Esophagus squamous epithelium (tissue), 5 donors: ENCODE measurements at regions of chr16 and their contacts with region 1.

Region 1: DNA sequence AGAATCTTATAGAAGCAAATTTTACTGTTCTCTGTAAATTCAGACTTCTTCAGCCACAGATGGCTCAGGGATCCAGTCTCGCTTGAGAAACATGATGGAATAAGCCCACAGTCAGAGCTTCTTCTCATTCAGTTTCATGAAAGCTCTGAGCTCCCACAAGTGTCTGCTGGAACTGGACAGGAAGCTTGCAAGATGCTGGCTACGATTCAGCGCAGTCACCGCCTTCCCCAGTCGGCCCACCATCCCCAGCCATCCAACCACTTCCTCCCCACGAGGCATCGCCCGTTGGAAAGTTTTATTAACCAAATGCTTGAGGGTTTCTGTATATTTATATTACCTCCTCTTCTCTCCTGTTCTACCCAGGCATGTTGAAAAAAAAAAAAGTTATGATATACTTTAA is 171.7 kb downstream of the ZFHX3 start:
- DNase-seq: no peak
- H3K4me3 ChIP-seq: no peak overlapping the region
- H3K27ac ChIP-seq: peak overlapping the region in 1 of 4 donors; percentile 27
- H3K4me1 ChIP-seq: peaks cover 16 to 50% (median 26%) of the 10 kb centered on the region in 3 donors
- H3K27me3 ChIP-seq: no peaks in the 10 kb centered on the region
- CTCF ChIP-seq: no peak
- POLR2A ChIP-seq: no peak

Region 2: GRCh38 chr16:72989579-72990551 is 113.6 kb after region 1 on chr16:
- intact Hi-C with region 1: loop called (anchors 10 kb)
- DNase-seq: no peak
- H3K4me3 ChIP-seq: peak overlapping the region in 3 of 4 donors; percentile 25 to 49 (median 35)
- H3K27ac ChIP-seq: peak overlapping the region; percentile 83 to 95 (median 92)
- H3K4me1 ChIP-seq: peaks cover 38 to 88% (median 51%) of the 10 kb centered on the region in 3 donors
- H3K27me3 ChIP-seq: no peaks in the 10 kb centered on the region
- CTCF ChIP-seq: no peak
- POLR2A ChIP-seq: no peak